MCF 10A (cell line): ENCODE measurements at regions of chr15 and their contacts with region 1.

Region 1: DNA sequence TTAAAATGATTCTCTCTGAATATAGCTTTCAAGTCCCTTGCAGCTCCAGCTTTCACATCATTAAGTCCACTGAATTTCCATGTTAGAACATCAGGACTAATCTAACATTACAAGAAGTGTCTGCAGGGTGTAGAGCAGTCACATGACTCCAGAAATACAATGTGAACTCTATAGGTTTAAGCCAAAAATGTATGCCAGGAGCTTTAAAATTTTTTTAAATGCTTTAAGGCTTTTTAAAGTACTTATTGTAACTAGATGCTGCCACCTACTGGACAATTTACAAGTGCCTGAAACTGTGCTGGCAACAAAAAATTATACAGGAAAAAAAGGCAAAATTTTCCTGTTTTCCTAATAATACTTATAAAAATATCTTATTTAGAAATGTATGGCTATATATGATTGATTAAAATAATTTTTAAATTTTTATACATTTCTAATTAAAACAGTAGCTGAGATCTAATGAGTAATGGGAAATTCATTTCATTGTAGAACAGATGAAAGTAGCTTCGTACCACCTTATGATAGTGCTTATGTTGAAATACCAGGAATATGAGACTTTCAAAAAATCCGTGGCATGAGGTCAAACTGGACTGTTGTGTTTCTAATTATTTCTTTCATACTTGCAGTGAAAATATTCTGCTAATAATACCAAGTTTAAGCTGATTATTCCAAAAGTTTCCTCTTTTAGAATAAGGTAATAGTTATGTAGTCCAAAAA is 25.7 kb downstream of the FSIP1 start:
- DNase-seq: peak; percentile 61
- H3K4me3 Mint-ChIP-seq: no peak overlapping the region
- H3K27ac Mint-ChIP-seq: no peak overlapping the region
- H3K4me1 Mint-ChIP-seq: no peaks in the 10 kb centered on the region
- H3K27me3 Mint-ChIP-seq: no peaks in the 10 kb centered on the region
- CTCF ChIP-seq: peak; percentile 77

Region 2: DNA sequence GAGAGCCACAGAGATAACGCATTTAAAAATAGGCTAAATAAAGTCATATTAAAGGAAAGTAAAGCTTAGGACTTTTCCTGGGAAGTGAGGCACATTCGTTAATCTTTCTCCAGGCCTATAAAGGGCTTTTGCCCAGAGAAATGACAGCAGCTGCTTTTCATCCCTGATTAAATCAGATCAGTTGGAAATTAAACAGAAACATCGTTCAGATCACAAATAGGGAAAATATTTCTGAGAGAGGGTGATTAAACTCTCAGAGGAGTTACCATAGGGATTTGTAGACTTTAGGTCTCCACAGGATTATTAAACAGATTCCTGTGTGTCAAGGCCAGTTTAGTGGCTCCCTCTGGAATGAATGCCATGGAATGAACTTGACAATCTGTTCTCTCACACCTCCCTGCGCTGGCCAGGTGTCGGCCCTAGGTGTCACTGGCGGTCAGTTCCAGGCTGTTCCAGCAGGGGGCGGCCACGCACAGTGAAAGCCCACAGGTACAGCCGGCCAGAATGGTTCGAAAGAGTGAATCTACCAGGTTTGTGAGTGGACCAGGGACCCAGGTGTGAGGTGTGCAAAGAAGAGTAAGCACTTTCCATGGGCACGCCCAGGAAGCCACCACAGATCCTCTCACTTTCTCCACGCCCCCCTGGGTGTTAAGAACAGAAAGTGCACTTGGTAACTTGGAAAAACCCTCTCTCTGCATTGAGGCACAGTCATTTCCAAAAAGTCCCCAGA is 939.4 kb before region 1 on chr15:
- CTCF ChIA-PET with region 1: interaction called, 16 read pairs
- POLR2A ChIA-PET with region 1: no interaction called
- intact Hi-C with region 1: loop called (anchors 1 kb)
- DNase-seq: peak; percentile 85
- H3K4me3 Mint-ChIP-seq: no peak overlapping the region
- H3K27ac Mint-ChIP-seq: no peak overlapping the region
- H3K4me1 Mint-ChIP-seq: no peaks in the 10 kb centered on the region
- H3K27me3 Mint-ChIP-seq: no peaks in the 10 kb centered on the region
- CTCF ChIP-seq: peak; percentile 100

Region 3: DNA sequence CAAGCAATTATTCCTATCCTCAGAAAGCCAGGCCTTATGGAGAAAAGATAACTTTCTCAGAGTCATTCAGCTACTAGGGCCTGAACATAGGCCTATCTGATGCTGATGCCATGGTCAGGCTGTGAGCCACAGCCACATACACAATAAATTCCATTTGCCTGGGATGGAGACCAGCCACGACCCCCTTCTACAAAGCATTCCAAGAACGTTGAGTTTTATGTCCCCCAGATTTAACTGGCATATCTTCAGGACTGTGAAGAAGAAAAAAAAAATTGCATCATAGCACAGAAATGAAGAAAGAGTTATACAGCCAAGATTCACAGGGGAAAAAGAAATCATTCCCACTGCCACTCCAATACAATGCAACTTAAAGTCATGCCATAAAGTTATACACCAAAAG is 76.1 kb before region 1 on chr15:
- CTCF ChIA-PET with region 1: interaction called, 147 read pairs
- POLR2A ChIA-PET with region 1: interaction called, 9 read pairs
- intact Hi-C with region 1: loop called (anchors 1 kb)
- DNase-seq: no peak
- H3K4me3 Mint-ChIP-seq: no peak overlapping the region
- H3K27ac Mint-ChIP-seq: no peak overlapping the region
- H3K4me1 Mint-ChIP-seq: no peaks in the 10 kb centered on the region
- H3K27me3 Mint-ChIP-seq: no peaks in the 10 kb centered on the region
- CTCF ChIP-seq: no peak

Region 4: GRCh38 chr15:39692356-39693327 is 64.3 kb before region 1 on chr15:
- CTCF ChIA-PET with region 1: interaction called, 147 read pairs
- POLR2A ChIA-PET with region 1: interaction called, 4 read pairs
- intact Hi-C with region 1: no loop called
- DNase-seq: no peak
- H3K4me3 Mint-ChIP-seq: no peak overlapping the region
- H3K27ac Mint-ChIP-seq: no peak overlapping the region
- H3K4me1 Mint-ChIP-seq: no peaks in the 10 kb centered on the region
- H3K27me3 Mint-ChIP-seq: no peaks in the 10 kb centered on the region
- CTCF ChIP-seq: no peak

Region 5: GRCh38 chr15:39767921-39768320 is 11.0 kb after region 1 on chr15:
- CTCF ChIA-PET with region 1: interaction called, 25 read pairs
- POLR2A ChIA-PET with region 1: interaction called, 3 read pairs
- intact Hi-C with region 1: no loop called
- DNase-seq: no peak
- H3K4me3 Mint-ChIP-seq: no peak overlapping the region
- H3K27ac Mint-ChIP-seq: no peak overlapping the region
- H3K4me1 Mint-ChIP-seq: peaks cover 6% of the 10 kb centered on the region
- H3K27me3 Mint-ChIP-seq: no peaks in the 10 kb centered on the region
- CTCF ChIP-seq: no peak